ENCODE measurements at regions of chr7 and their contacts with region 1.

Region 1: DNA sequence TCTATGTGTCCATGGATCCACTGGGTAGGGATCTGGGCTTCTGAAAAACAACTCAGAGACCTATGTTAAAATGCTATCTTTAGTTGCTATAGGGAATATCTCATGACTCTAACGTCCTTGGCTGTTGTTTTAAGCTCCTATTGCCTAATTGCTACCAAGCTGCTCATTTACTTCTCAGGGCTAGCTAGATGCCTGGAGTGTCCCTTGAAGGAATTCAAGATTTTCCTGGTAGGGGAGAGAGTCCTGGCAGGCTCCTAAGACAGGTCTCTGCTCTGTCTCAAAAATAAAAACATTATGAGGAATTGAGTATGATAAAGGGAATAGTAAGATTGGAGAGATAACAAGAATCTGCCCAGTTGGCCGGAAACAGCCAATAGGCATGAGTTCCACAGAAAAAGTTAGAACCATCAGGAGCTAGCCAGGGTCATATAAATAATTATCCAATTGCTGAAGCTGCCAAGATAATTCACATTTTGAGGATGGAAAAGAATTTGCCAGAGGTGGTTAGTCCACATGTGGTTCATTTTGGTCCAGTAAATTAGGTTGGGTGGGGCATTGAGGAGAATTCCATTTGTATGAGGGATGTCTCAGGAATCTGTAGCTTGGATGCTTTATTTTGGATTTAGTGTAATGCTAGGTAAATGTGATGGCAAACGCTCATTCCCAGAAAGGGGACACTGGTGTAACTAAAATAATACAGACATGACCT is 362.7 kb upstream of the VSTM2A start:
- DNase-seq: peak; percentile 37
- H3K4me3 ChIP-seq: no peak overlapping the region
- H3K27ac ChIP-seq: peak overlapping the region; percentile 73
- H3K4me1 ChIP-seq: peaks cover 35% of the 10 kb centered on the region
- H3K27me3 ChIP-seq: no peaks in the 10 kb centered on the region
- CTCF ChIP-seq: no peak

Region 2: DNA sequence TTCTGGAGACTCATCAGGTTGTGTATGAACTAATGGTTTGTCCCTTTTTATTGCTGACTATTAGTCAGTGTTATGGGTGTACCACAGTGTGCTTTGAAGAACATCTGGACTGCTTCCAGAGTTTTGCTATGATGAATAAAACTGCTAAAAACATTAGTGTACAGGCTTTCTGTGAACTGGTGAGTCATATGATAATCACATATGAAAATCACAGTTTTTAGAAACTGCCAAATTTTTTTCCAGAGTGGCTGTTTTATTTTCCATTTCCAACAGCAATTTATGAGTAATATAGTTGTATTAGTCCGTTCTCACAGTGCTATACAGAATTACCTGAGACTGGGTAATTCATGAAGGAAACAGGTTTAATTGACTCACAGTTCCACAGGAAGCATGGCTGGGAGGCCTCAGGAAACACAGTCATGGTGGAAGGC is 81.5 kb after region 1 on chr7:
- CTCF ChIA-PET with region 1: no interaction called
- dilution Hi-C with region 1: no loop called
- in situ Hi-C with region 1: no loop called
- intact Hi-C with region 1: loop called (anchors 10 kb)
- DNase-seq: peak; percentile 97
- H3K4me3 ChIP-seq: no peak overlapping the region
- H3K27ac ChIP-seq: peak overlapping the region; percentile 85
- H3K4me1 ChIP-seq: peaks cover 5% of the 10 kb centered on the region
- H3K27me3 ChIP-seq: no peaks in the 10 kb centered on the region
- CTCF ChIP-seq: no peak

Measured in mammary epithelial cell (primary cell).